ENCODE measurements at regions of chr7 and their contacts with region 1.

Region 1: DNA sequence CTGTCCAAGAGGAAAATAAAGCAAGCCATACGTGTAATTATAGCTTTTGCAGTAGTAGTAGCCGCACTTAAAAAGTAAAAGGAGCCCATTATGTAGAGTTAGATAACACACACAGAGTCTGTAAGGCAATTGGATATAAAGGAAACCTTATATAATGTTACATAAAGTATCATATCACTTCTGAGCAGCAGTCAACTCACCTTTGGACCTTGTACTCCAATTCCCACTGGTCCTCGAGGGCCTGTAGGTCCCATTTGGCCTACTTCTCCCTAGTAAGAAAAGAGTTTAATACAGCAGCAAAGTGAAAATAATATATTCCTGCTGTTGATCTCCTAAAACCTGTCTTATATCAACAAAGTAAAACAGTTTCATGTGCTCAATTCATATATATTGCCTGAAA is 83.6 kb downstream of the COL28A1 start:
- DNase-seq: no peak
- ATAC-seq: no peak
- H3K4me3 ChIP-seq: no peak overlapping the region
- H3K27ac ChIP-seq: no peak overlapping the region
- H3K4me1 ChIP-seq: no peaks in the 10 kb centered on the region
- H3K27me3 ChIP-seq: no peaks in the 10 kb centered on the region
- CTCF ChIP-seq: no peak
- POLR2A ChIP-seq: no peak
- RAD21 ChIP-seq: no peak

Region 2: GRCh38 chr7:7489546-7489945 is 37.4 kb after region 1 on chr7:
- CTCF ChIA-PET with region 1: no interaction called
- POLR2A ChIA-PET with region 1: no interaction called
- RAD21 ChIA-PET with region 1: no interaction called
- intact Hi-C with region 1: loop called (anchors 5 kb)
- DNase-seq: no peak
- ATAC-seq: no peak
- H3K4me3 ChIP-seq: no peak overlapping the region
- H3K27ac ChIP-seq: no peak overlapping the region
- H3K4me1 ChIP-seq: peaks cover 7 to 26% of the 10 kb centered on the region in 2 experiments
- H3K27me3 ChIP-seq: no peaks in the 10 kb centered on the region
- CTCF ChIP-seq: no peak
- POLR2A ChIP-seq: no peak
- RAD21 ChIP-seq: no peak

Region 3: DNA sequence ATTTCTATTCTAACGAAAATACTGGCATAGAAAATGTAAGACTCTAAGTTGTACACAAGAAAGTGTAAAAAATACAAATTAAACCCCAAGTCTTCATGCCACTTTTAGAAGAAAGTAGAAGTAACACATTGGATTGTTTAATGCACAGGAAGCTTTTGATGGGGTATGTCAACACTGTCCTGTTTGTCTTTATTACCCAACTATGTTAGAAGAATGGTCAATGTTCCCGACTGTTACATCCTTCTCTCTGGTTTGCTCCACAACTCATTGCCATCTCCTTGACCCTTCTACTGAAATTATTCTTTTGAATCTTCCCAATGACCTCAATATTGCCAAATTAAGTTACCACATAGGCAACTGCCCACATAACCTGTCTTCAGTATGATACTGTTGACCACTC is 47.8 kb after region 1 on chr7:
- CTCF ChIA-PET with region 1: no interaction called
- POLR2A ChIA-PET with region 1: no interaction called
- RAD21 ChIA-PET with region 1: no interaction called
- intact Hi-C with region 1: no loop called
- DNase-seq: no peak
- ATAC-seq: no peak
- H3K4me3 ChIP-seq: no peak overlapping the region
- H3K27ac ChIP-seq: no peak overlapping the region
- H3K4me1 ChIP-seq: no peaks in the 10 kb centered on the region
- H3K27me3 ChIP-seq: no peaks in the 10 kb centered on the region
- CTCF ChIP-seq: no peak
- POLR2A ChIP-seq: no peak
- RAD21 ChIP-seq: no peak

Region 4: GRCh38 chr7:7512861-7513597 is 60.9 kb after region 1 on chr7:
- CTCF ChIA-PET with region 1: no interaction called
- POLR2A ChIA-PET with region 1: no interaction called
- RAD21 ChIA-PET with region 1: no interaction called
- intact Hi-C with region 1: no loop called
- DNase-seq: no peak
- ATAC-seq: no peak
- H3K4me3 ChIP-seq: no peak overlapping the region
- H3K27ac ChIP-seq: no peak overlapping the region
- H3K4me1 ChIP-seq: no peaks in the 10 kb centered on the region
- H3K27me3 ChIP-seq: no peaks in the 10 kb centered on the region
- CTCF ChIP-seq: no peak
- POLR2A ChIP-seq: no peak
- RAD21 ChIP-seq: no peak